ENCODE measurements at regions of chr2 and their contacts with region 1.

Region 1: DNA sequence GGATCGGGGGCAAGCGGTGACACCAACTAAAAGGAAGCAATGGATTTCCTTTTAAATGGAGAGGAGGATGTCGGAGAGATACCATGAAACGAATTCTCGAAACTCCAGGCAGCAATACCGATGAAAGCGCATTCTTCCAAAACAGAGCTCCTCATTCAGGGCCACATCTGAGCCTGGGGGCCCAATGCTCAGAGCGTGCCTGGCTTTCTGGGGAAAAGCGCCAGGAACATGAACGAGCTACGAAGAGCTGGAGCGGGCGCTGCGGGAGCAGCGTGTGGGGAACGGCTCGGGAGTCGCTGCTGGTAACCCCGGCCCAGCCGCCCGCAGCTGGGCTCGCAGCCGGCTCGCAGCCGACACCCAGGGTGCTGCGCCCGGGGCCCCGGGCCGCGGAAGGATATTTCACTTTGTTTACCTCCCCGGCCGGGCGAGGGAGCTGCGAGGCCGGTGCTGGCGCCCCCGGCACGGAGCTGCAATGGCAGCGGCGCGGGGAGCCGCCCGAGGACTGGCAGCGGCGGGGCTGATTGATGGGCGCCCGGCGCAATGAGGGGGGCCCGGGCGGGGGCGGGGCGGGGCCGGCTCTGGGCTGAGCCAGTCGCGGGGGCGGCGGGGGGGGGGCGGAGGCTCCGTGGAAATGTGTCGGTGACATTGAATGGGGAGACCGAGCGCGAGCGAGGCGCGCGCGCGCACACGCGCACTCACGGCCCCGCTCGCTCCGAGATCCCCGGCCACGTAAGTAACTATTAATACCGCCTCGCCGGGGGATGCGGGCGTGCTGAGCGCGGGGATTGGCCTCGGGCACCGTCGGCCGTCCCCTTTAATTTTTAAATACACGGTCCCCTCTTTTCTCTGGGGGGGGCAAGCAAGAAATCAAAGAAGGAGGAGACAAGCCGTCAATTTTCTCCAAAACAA is at the start of gene TRIB2:
- DNase-seq: peak; percentile 87 to 92 (median 89)
- H3K4me3 ChIP-seq: peak within 1 kb of the TSS; percentile 78 to 96
- H3K4me3 Mint-ChIP-seq: peak within 1 kb of the TSS; percentile 98 to 100 (median 99)
- H3K27ac ChIP-seq: peak within 1 kb of the TSS; percentile 84
- H3K27ac Mint-ChIP-seq: peak within 1 kb of the TSS; percentile 93 to 99 (median 96)
- H3K4me1 ChIP-seq: peaks cover 39% of the 10 kb centered on the region
- H3K4me1 Mint-ChIP-seq: peaks cover 28 to 83% (median 43%) of the 10 kb centered on the region in 4 donors
- H3K27me3 ChIP-seq: no peaks in the 10 kb centered on the region
- H3K27me3 Mint-ChIP-seq: peaks cover 0 to 2% of the 10 kb centered on the region in 2 donors
- total RNA-seq, gene TRIB2: 123 to 126 TPM

Region 2: GRCh38 chr2:11829947-11830707 is 886.4 kb before region 1 on chr2:
- CTCF ChIA-PET with region 1: interaction called, 25 read pairs
- POLR2A ChIA-PET with region 1: interaction called, 12 read pairs
- intact Hi-C with region 1: loop called (anchors 1 kb)
- DNase-seq: peak; percentile 62 to 76 (median 68)
- H3K4me3 ChIP-seq: peak overlapping the region; percentile 52 to 53
- H3K4me3 Mint-ChIP-seq: peak overlapping the region; percentile 83 to 92 (median 85)
- H3K27ac ChIP-seq: no peak overlapping the region
- H3K27ac Mint-ChIP-seq: peak overlapping the region; percentile 42 to 90 (median 82)
- H3K4me1 ChIP-seq: peaks cover 28% of the 10 kb centered on the region
- H3K4me1 Mint-ChIP-seq: peaks cover 23 to 45% (median 36%) of the 10 kb centered on the region in 4 donors
- H3K27me3 ChIP-seq: no peaks in the 10 kb centered on the region
- H3K27me3 Mint-ChIP-seq: no peaks in the 10 kb centered on the region

Region 3: GRCh38 chr2:12169721-12170120 is 546.8 kb before region 1 on chr2:
- CTCF ChIA-PET with region 1: interaction called, 10 read pairs
- POLR2A ChIA-PET with region 1: interaction called, 3 read pairs
- intact Hi-C with region 1: no loop called
- DNase-seq: peak; percentile 22 to 70 (median 57)
- H3K4me3 ChIP-seq: no peak overlapping the region
- H3K4me3 Mint-ChIP-seq: peak overlapping the region in 6 of 8 donors; percentile 29 to 78 (median 48)
- H3K27ac ChIP-seq: no peak overlapping the region
- H3K27ac Mint-ChIP-seq: peak overlapping the region; percentile 17 to 86 (median 69)
- H3K4me1 ChIP-seq: peaks cover 28% of the 10 kb centered on the region
- H3K4me1 Mint-ChIP-seq: peaks cover 17 to 39% (median 28%) of the 10 kb centered on the region in 4 donors
- H3K27me3 ChIP-seq: no peaks in the 10 kb centered on the region
- H3K27me3 Mint-ChIP-seq: no peaks in the 10 kb centered on the region

Region 4: DNA sequence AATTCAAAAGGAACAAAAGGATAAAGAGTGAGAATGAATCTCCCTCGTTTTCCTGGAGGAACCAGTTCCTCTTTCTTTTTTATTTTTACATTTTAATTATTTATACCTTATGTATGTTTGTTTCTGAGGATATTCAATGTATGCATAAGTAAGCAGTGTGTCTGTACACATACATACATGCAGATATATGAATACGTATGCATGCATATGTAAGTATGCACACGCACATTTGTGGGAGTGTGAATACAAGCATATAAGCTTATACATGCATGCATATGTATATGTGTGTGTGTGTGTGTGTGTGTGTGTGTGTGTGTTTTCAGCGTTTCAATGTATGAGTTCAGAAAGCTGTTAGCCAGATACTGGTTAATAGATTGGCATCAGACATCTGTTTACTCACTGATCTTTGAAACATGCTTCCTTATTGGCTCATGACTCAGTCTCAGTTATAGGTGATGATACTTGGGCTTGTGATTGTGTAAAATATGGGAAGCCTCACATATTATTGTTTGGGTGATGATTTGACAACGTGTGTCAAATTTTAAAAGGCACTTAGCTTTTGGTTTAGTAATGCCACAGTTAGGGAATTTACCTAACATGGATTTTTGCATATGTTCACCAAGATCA is 279.5 kb before region 1 on chr2:
- CTCF ChIA-PET with region 1: interaction called, 64 read pairs
- POLR2A ChIA-PET with region 1: interaction called, 36 read pairs
- intact Hi-C with region 1: loop called (anchors 5 kb)
- DNase-seq: no peak
- H3K4me3 ChIP-seq: no peak overlapping the region
- H3K4me3 Mint-ChIP-seq: peak overlapping the region in 1 of 8 donors; percentile 69
- H3K27ac ChIP-seq: no peak overlapping the region
- H3K27ac Mint-ChIP-seq: peak overlapping the region in 1 of 7 donors; percentile 18
- H3K4me1 ChIP-seq: peaks cover 40% of the 10 kb centered on the region
- H3K4me1 Mint-ChIP-seq: peaks cover 25 to 62% (median 33%) of the 10 kb centered on the region in 4 donors
- H3K27me3 ChIP-seq: no peaks in the 10 kb centered on the region
- H3K27me3 Mint-ChIP-seq: no peaks in the 10 kb centered on the region

Region 5: GRCh38 chr2:12507295-12507694 is 209.2 kb before region 1 on chr2:
- CTCF ChIA-PET with region 1: interaction called, 30 read pairs
- POLR2A ChIA-PET with region 1: interaction called, 101 read pairs
- intact Hi-C with region 1: no loop called
- DNase-seq: peak; percentile 45 to 75 (median 48)
- H3K4me3 ChIP-seq: peak overlapping the region in 1 of 2 donors; percentile 21
- H3K4me3 Mint-ChIP-seq: peak overlapping the region; percentile 7 to 79 (median 72)
- H3K27ac ChIP-seq: no peak overlapping the region
- H3K27ac Mint-ChIP-seq: peak overlapping the region; percentile 70 to 93 (median 84)
- H3K4me1 ChIP-seq: peaks cover 77% of the 10 kb centered on the region
- H3K4me1 Mint-ChIP-seq: peaks cover 77 to 100% (median 86%) of the 10 kb centered on the region in 4 donors
- H3K27me3 ChIP-seq: no peaks in the 10 kb centered on the region
- H3K27me3 Mint-ChIP-seq: no peaks in the 10 kb centered on the region

Region 6: GRCh38 chr2:12702305-12703121 is 14.0 kb before region 1 on chr2:
- CTCF ChIA-PET with region 1: interaction called, 37 read pairs
- POLR2A ChIA-PET with region 1: interaction called, 38 read pairs
- intact Hi-C with region 1: no loop called
- DNase-seq: no peak
- H3K4me3 ChIP-seq: no peak overlapping the region
- H3K4me3 Mint-ChIP-seq: peak overlapping the region in 7 of 8 donors; percentile 40 to 75 (median 58)
- H3K27ac ChIP-seq: no peak overlapping the region
- H3K27ac Mint-ChIP-seq: peak overlapping the region in 2 of 7 donors; percentile 45 to 60
- H3K4me1 ChIP-seq: peaks cover 50% of the 10 kb centered on the region
- H3K4me1 Mint-ChIP-seq: peaks cover 32 to 48% (median 44%) of the 10 kb centered on the region in 4 donors
- H3K27me3 ChIP-seq: no peaks in the 10 kb centered on the region
- H3K27me3 Mint-ChIP-seq: no peaks in the 10 kb centered on the region

Region 7: DNA sequence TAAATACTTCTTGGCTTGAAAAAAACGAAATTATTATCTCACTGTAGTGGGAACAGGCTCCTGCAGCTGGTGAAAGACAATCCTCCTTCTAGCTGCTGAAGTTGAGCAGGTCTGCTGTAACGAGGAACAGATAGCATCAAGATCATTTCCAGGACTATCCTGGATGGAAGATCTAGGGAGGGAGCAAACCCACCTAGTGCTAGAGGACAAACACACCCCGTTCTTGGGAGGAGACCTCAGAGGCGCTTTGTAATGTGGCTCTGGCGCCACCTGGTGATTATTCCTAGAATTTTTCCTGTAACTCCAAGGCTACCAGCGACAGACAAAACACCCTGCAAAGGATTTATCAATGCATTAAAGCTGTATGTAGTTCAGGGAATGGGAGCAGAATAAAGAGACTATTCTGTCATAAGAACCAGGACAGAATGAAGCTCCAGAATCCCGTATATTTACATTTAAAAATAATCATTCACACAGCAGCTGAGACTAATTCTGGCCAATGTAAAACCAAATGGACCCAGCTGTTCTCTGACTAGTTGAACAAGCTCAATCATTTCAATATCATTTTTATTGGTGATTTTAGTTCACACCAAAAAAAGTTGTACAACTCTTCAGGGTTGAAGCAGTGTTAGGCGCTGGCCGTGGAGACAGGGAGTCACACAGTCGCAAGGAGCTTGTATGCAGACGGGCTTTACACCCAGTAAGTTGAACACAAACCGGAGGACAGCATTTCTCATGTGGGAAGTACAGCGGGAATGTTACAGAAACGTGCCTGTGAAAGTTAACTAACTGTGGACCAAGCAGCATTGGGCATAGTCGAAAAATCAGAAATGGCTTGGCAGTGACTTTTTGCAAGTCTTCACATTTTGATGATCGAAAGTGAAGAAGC is 290.5 kb after region 1 on chr2:
- CTCF ChIA-PET with region 1: interaction called, 35 read pairs
- POLR2A ChIA-PET with region 1: interaction called, 4 read pairs
- intact Hi-C with region 1: loop called (anchors 1 kb)
- DNase-seq: peak; percentile 49 to 67 (median 61)
- H3K4me3 ChIP-seq: no peak overlapping the region
- H3K4me3 Mint-ChIP-seq: no peak overlapping the region
- H3K27ac ChIP-seq: no peak overlapping the region
- H3K27ac Mint-ChIP-seq: no peak overlapping the region
- H3K4me1 ChIP-seq: peaks cover 5% of the 10 kb centered on the region
- H3K4me1 Mint-ChIP-seq: peaks cover 0 to 7% (median 3%) of the 10 kb centered on the region in 4 donors
- H3K27me3 ChIP-seq: no peaks in the 10 kb centered on the region
- H3K27me3 Mint-ChIP-seq: peaks cover 0 to 2% of the 10 kb centered on the region in 2 donors

Measured in CD4-positive, alpha-beta memory T cell (primary cell).